Activated CD4-positive, alpha-beta memory T cell treated with anti-CD3 and anti-CD28 coated beads for 36 hours (primary cell): ENCODE measurements at regions of chr1 and their contacts with region 1.

Region 1: GRCh38 chr1:247331172-247331991 is at the start of gene ZNF496:
- DNase-seq: peak; percentile 85
- H3K4me3 Mint-ChIP-seq: peak within 1 kb of the TSS; percentile 83
- H3K27ac Mint-ChIP-seq: peak within 1 kb of the TSS; percentile 66
- H3K4me1 Mint-ChIP-seq: peaks cover 13% of the 10 kb centered on the region
- H3K27me3 Mint-ChIP-seq: no peaks in the 10 kb centered on the region
- total RNA-seq, gene ZNF496: 10.6 to 12.0 TPM

Region 2: GRCh38 chr1:247078261-247079140 is 252.9 kb before region 1 on chr1 and contains the start of gene ZNF670:
- CTCF ChIA-PET with region 1: no interaction called
- POLR2A ChIA-PET with region 1: interaction called, 5 read pairs
- intact Hi-C with region 1: loop called (anchors 2 kb)
- DNase-seq: peak; percentile 96
- H3K4me3 Mint-ChIP-seq: peak within 1 kb of the TSS; percentile 90
- H3K27ac Mint-ChIP-seq: peak within 1 kb of the TSS; percentile 85
- H3K4me1 Mint-ChIP-seq: peaks cover 24% of the 10 kb centered on the region
- H3K27me3 Mint-ChIP-seq: peaks cover 3% of the 10 kb centered on the region
- total RNA-seq, gene ZNF670: 3.9 to 4.5 TPM

Region 3: DNA sequence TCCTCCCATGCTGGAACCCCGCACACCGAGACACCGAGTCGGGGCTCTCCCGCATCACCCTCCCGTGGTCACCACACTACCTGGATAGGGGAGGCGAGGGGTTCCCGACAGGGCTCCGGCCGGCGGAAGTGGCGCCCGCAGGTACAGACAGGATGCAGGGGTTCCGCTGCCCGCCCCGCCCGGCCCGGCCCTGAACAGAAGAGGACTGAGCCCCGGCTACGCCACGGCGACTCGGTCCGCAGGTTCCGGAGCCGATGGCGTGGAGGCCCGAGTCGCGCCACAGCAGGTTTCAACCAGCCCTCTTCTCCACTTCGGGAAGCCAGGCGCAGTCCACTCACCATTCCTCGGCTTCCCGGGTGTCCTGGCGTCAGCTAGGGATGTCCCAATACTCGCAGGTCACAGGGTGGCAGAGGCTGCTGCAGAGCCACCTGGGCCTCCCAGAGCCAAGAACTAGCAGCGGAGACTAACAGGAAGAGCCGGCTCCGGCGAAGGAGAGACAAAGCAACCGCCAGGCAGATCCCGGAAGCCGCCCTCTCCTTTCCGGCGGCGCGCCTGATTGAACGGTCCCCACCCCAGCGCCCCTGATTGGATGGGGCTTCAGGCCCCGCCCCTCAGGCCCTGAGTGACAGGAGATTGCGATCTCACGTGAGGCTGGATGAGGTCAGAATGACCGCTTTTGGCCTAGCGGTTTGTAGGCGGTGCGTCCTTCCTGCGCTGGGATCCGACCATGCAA is 227.4 kb before region 1 on chr1 and contains the start of gene ZNF669:
- CTCF ChIA-PET with region 1: no interaction called
- POLR2A ChIA-PET with region 1: no interaction called
- intact Hi-C with region 1: loop called (anchors 10 kb)
- DNase-seq: peak; percentile 96
- H3K4me3 Mint-ChIP-seq: peak within 1 kb of the TSS; percentile 87
- H3K27ac Mint-ChIP-seq: peak within 1 kb of the TSS; percentile 88
- H3K4me1 Mint-ChIP-seq: peaks cover 16% of the 10 kb centered on the region
- H3K27me3 Mint-ChIP-seq: peaks cover 24% of the 10 kb centered on the region
- total RNA-seq, gene ZNF669: 7.9 to 8.4 TPM

Region 4: DNA sequence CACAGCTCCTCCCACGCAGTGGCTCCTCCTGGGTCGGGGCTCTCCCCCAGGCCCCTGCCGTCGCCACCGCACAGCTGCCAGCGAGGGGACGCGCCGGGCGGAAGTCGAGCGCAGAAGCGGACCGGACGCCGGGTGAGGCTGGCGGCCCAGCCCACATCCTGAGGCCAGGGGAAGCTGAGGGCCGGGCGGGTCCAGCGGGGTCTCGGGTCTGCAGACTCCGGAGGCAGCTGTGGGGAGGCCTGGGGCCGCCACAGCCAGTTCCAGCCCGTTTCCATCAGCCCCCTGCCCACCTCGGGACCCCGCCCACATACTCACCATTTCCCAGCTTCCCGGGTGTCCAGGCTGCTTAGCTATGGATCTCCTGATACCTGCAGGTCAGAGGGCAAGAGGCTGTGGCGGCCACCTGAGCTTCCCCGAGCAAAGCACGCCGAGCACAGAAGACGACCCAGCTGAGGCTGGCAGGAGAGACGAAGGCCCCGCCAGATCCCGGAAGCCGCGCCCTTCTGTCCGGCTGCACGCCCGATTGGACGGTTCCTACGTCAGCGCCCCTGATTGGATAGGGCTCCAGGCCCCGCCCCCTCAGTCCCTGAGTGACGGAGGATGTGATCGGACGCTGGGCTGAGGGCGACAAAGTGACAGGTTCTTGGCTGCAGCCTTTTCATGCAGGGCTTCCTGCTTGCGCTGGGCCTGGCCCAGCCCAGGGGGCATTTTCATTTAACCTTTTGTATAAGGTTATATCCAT is 120.8 kb before region 1 on chr1:
- CTCF ChIA-PET with region 1: interaction called, 3 read pairs
- POLR2A ChIA-PET with region 1: interaction called, 7 read pairs
- intact Hi-C with region 1: loop called (anchors 1 kb)
- DNase-seq: peak; percentile 98
- H3K4me3 Mint-ChIP-seq: peak overlapping the region; percentile 90
- H3K27ac Mint-ChIP-seq: peak overlapping the region; percentile 96
- H3K4me1 Mint-ChIP-seq: peaks cover 62% of the 10 kb centered on the region
- H3K27me3 Mint-ChIP-seq: no peaks in the 10 kb centered on the region

Region 5: GRCh38 chr1:247373721-247374141 is 42.3 kb after region 1 on chr1:
- CTCF ChIA-PET with region 1: interaction called, 10 read pairs
- POLR2A ChIA-PET with region 1: no interaction called
- intact Hi-C with region 1: no loop called
- DNase-seq: peak; percentile 67
- H3K4me3 Mint-ChIP-seq: no peak overlapping the region
- H3K27ac Mint-ChIP-seq: no peak overlapping the region
- H3K4me1 Mint-ChIP-seq: peaks cover 2% of the 10 kb centered on the region
- H3K27me3 Mint-ChIP-seq: peaks cover 8% of the 10 kb centered on the region

Region 6: GRCh38 chr1:247471445-247472016 is 140.1 kb after region 1 on chr1:
- CTCF ChIA-PET with region 1: no interaction called
- POLR2A ChIA-PET with region 1: no interaction called
- intact Hi-C with region 1: no loop called
- DNase-seq: no peak
- H3K4me3 Mint-ChIP-seq: no peak overlapping the region
- H3K27ac Mint-ChIP-seq: no peak overlapping the region
- H3K4me1 Mint-ChIP-seq: peaks cover 3% of the 10 kb centered on the region
- H3K27me3 Mint-ChIP-seq: peaks cover 7% of the 10 kb centered on the region